ENCODE measurements at regions of chr7 and their contacts with region 1.

Region 1: DNA sequence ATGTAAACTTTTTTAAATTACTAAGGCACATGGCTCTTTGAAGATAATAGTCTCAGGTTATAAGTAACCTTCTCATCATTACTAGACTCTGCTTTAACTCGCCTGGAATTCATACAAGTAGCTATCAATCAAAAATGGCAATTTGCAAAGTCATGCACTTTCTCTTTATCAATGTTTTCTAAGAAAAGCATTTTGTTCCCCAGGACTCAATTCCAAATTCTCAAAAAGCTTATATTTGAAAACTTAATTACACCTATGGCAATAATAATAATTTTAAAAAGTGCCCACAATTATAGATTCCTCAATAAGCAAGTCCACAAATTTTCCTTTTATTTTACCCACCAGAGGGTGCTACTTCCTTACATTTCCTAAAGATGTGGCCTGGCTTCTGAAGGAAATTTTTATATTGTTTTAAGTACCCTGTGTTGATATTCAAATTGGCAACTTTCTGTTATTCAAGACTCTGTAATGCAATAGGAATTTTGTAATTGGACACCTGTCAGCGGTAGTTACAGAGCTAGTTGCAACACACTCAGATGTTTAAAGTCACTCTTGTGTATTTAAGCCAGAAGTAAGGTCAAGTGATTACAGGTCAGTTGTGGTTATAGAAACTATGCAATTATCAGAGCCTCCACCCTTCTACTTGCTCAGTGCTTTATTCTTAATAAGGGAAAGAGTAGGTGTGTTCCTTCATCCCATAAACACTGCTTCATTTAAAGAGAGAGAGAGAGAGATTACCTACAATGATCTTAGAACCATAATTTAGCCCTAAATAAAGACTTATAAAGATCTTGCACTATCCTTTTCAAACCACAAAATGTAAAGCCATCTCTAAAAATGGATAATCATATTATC is 47.1 kb upstream of the HYAL4 start:
- DNase-seq: peak in 1 of 3 donors; percentile 38
- ATAC-seq: peak; percentile 91
- H3K4me3 ChIP-seq: no peak overlapping the region
- H3K4me1 ChIP-seq: peaks cover 13% of the 10 kb centered on the region
- CTCF ChIP-seq: no peak

Region 2: GRCh38 chr7:123327661-123328060 is 470.2 kb before region 1 on chr7:
- intact Hi-C with region 1: no loop called
- DNase-seq: no peak
- ATAC-seq: no peak
- H3K4me3 ChIP-seq: no peak overlapping the region
- H3K4me1 ChIP-seq: no peaks in the 10 kb centered on the region
- CTCF ChIP-seq: no peak

Region 3: GRCh38 chr7:123709525-123709924 is 88.4 kb before region 1 on chr7:
- intact Hi-C with region 1: loop called in 1 of 2 experiments (anchors 10 kb)
- DNase-seq: no peak
- ATAC-seq: no peak
- H3K4me3 ChIP-seq: no peak overlapping the region
- H3K4me1 ChIP-seq: peaks cover 21% of the 10 kb centered on the region
- CTCF ChIP-seq: no peak

Measured in mucosa of descending colon (tissue), 3 donors.